ENCODE measurements at regions of chr17 and their contacts with region 1.

Region 1: DNA sequence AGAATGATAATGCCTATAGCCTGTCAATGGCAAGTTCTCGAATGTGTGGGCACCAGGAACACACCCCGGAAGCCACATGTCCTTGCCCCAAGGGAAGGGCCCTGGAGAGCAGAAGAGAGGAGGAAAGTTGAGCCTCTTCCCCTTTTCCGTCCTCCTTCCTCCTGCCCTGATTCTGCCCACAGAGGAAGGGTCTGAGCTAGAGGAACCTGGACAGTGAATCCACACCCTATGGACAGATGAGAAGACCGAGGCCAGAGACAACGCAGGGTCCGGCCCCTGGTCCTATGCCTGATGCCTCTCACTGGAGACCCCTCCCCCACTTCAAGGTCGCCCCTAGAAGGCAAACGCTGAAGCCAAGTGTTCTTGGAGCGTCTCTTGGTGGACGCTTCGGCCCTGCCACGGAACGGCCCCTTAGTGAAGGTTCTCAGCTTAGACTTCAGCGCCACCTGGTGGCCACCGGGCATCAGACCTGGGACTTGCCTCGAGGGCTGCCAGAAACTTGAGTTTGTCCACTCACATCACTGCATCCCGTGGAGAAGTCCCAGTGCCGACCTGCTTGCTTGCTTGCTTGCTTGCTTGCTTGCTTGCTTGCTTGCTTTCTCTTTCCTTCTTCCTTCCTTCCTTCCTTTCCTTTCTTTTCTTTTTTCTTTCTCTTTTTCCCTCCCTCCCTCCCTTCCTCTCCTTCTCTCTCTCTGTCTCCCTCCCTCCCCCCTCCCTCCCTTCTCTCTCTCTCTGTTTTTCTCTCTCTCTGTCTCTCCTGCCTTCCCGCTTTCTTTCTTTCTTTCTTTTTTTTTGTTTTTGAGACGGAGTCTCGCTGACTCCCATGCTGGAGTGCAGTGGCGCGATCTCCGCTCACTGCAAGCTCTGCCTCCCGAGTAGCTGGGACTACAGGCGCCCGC is 20.6 kb upstream of the SPNS3 start:
- DNase-seq: peak; percentile 83 to 96 (median 89)
- ATAC-seq: peak; percentile 96
- H3K4me3 ChIP-seq: peak overlapping the region in 1 of 2 experiments; percentile 4
- H3K4me3 Mint-ChIP-seq: no peak overlapping the region
- H3K27ac ChIP-seq: no peak overlapping the region
- H3K27ac Mint-ChIP-seq: no peak overlapping the region
- H3K4me1 ChIP-seq: peaks cover 4% of the 10 kb centered on the region
- H3K4me1 Mint-ChIP-seq: peaks cover 6% of the 10 kb centered on the region
- H3K27me3 ChIP-seq: no peaks in the 10 kb centered on the region
- H3K27me3 Mint-ChIP-seq: no peaks in the 10 kb centered on the region
- CTCF ChIP-seq: peak; percentile 63

Region 2: GRCh38 chr17:4199818-4200402 is 213.3 kb before region 1 on chr17:
- CTCF ChIA-PET with region 1: interaction called, 28 read pairs
- POLR2A ChIA-PET with region 1: no interaction called
- intact Hi-C with region 1: loop called (anchors 1 kb)
- DNase-seq: peak in 6 of 9 experiments; percentile 6 to 67 (median 41)
- ATAC-seq: peak; percentile 80
- H3K4me3 ChIP-seq: no peak overlapping the region
- H3K4me3 Mint-ChIP-seq: no peak overlapping the region
- H3K27ac ChIP-seq: no peak overlapping the region
- H3K27ac Mint-ChIP-seq: no peak overlapping the region
- H3K4me1 ChIP-seq: no peaks in the 10 kb centered on the region
- H3K4me1 Mint-ChIP-seq: no peaks in the 10 kb centered on the region
- H3K27me3 ChIP-seq: no peaks in the 10 kb centered on the region
- H3K27me3 Mint-ChIP-seq: no peaks in the 10 kb centered on the region
- CTCF ChIP-seq: peak; percentile 84

Region 3: GRCh38 chr17:4304417-4305027 is 108.7 kb before region 1 on chr17:
- CTCF ChIA-PET with region 1: interaction called, 3 read pairs
- POLR2A ChIA-PET with region 1: no interaction called
- intact Hi-C with region 1: loop called (anchors 1 to 2 kb)
- DNase-seq: peak in 8 of 9 experiments; percentile 23 to 76 (median 56)
- ATAC-seq: peak; percentile 79
- H3K4me3 ChIP-seq: no peak overlapping the region
- H3K4me3 Mint-ChIP-seq: no peak overlapping the region
- H3K27ac ChIP-seq: no peak overlapping the region
- H3K27ac Mint-ChIP-seq: no peak overlapping the region
- H3K4me1 ChIP-seq: peaks cover 6% of the 10 kb centered on the region
- H3K4me1 Mint-ChIP-seq: peaks cover 22% of the 10 kb centered on the region
- H3K27me3 ChIP-seq: no peaks in the 10 kb centered on the region
- H3K27me3 Mint-ChIP-seq: no peaks in the 10 kb centered on the region
- CTCF ChIP-seq: peak; percentile 80

Region 4: DNA sequence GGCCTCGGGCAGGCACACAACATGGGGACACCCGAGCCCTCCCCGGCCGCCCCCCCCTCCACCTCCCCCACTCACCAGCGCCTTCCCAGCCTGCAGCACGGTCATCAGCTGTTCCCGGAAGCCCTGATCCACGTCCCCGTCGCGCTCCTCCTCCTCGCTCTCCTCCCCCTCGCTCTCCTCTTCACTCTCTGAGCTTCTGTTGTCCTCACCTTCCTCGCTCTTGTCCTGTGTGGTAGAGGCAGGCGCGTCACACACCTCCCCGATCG is 131.7 kb after region 1 on chr17:
- CTCF ChIA-PET with region 1: no interaction called
- POLR2A ChIA-PET with region 1: no interaction called
- intact Hi-C with region 1: no loop called
- DNase-seq: no peak
- ATAC-seq: no peak
- H3K4me3 ChIP-seq: no peak overlapping the region
- H3K4me3 Mint-ChIP-seq: no peak overlapping the region
- H3K27ac ChIP-seq: no peak overlapping the region
- H3K27ac Mint-ChIP-seq: no peak overlapping the region
- H3K4me1 ChIP-seq: no peaks in the 10 kb centered on the region
- H3K4me1 Mint-ChIP-seq: no peaks in the 10 kb centered on the region
- H3K27me3 ChIP-seq: no peaks in the 10 kb centered on the region
- H3K27me3 Mint-ChIP-seq: no peaks in the 10 kb centered on the region
- CTCF ChIP-seq: no peak

Measured in CD8-positive, alpha-beta T cell (primary cell).